Right ventricle myocardium superior (tissue), 1 donor: ENCODE measurements at regions of chr4 and their contacts with region 1.

Region 1: GRCh38 chr4:38759113-38759789 is 23.5 kb downstream of the TLR10 start:
- DNase-seq: peak; percentile 53
- ATAC-seq: peak; percentile 82

Region 2: DNA sequence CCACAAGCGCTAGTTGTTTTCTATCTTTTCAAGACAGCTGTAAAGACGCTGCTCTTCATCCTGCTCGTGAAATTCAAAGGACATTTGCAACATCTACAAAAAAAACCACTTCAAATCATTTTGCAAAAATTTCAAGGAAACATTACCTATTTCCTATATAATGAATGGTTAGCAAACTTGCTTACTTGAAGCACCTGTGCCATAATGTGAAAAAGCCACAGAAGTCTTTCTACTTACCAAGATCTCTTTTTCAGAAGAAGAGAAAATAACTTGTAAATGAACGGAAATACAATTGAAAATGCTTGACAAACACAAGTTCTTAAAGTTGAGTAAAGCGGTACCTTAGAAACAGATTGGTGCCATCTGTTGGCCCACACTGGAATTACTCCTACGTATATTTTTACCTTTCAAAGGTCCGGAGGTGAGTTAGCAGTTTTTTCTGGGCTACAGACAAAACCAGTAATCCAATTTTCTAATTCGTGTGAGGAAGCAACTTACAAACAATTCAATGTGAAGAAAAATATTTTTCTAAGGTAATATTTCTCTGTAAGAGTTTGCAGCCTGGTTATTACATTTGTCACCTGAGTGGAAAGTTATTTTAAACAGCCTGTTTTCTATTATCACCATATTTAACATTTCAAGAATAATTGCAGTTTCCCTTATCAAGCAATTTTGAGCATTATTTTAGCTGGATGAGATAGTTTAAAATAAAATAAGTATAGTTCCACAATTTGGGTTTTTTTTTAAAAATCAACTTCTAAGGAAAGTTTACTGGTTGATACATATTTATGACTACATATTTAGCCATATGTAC is 97.5 kb after region 1 on chr4 and contains the start of gene TLR6:
- intact Hi-C with region 1: loop called (anchors 5 kb)
- DNase-seq: no peak
- ATAC-seq: peak; percentile 71
- total RNA-seq, gene TLR6: 2.3 TPM

Region 3: GRCh38 chr4:38958453-38959190 is 199.4 kb after region 1 on chr4:
- intact Hi-C with region 1: no loop called
- DNase-seq: no peak
- ATAC-seq: no peak

Region 4: DNA sequence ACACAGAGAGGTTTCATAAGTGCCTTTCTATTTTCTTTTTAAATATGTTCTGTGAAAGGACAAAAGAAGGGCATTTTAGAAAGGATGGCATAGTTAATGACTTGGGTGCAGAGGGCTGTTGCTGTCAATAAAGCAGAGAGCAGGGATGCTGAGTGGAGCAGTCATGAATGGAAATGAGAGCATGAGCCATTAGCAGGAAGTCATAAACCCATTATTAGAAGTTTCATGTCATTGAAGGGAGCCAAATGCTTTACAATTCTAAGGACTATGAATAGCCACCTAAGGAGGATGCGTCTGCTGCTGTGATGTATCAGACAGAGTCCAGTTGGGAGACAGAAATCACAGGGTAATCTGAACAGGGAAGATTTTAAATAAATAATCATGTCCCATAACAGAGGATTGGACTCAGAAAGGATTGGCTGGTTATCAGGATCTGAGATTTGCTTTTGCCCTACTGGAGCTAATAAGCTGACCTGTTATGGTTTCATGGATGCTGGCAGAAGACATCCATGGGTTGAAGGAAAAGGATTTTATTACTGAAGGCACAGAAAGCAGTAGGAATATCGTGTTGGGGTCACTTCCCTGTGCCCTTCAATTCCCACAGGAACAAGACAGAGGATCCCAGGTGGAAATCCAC is 375.6 kb after region 1 on chr4:
- intact Hi-C with region 1: loop called (anchors 10 kb)
- DNase-seq: no peak
- ATAC-seq: peak; percentile 18